Activated naive CD4-positive, alpha-beta T cell treated with anti-CD3 and anti-CD28 coated beads for 36 hours (primary cell): ENCODE measurements at regions of chr9 and their contacts with region 1.

Region 1: DNA sequence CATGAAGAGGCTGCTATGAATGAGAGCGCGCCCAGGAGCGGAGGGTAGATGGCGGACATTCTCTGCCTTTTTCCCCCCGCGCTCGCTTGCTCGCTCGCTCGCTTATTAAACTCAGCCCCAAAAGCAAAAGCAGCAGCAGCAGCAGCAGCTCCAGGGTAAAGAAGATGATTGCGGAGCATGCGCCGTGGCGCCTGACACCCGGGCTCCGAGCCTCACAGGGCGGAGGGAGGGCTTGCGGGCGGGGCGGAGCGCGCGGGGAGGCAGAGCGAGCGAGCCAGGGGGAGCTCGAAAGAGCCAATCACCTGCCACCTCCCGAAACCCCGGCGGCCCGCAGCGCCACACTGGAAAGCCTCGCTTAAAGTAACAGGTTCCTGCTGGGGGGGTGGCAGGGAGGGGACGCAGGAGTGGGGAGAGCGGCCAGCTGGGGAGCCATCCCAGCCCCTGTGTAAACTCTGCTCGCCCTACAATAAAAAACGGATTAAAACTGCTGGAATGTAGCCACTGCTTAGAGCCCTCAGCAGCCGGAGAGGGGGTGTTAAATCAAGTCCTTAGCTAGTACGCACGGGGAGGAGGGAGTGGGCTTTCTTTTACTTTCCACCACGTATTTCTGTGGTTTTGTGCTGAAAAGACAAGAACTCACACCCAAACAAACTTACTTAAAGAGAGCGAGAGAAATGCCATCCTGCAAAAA is at the start of gene MLLT3:
- DNase-seq: peak; percentile 97
- H3K4me3 Mint-ChIP-seq: peak within 1 kb of the TSS; percentile 98
- H3K27ac Mint-ChIP-seq: peak within 1 kb of the TSS; percentile 95
- H3K4me1 Mint-ChIP-seq: peaks cover 36% of the 10 kb centered on the region
- H3K27me3 Mint-ChIP-seq: no peaks in the 10 kb centered on the region
- total RNA-seq, gene MLLT3: 44.3 to 51.4 TPM

Region 2: GRCh38 chr9:19999491-20000057 is 622.9 kb before region 1 on chr9:
- CTCF ChIA-PET with region 1: no interaction called
- intact Hi-C with region 1: loop called (anchors 1 kb)
- DNase-seq: peak; percentile 85
- H3K4me3 Mint-ChIP-seq: no peak overlapping the region
- H3K27ac Mint-ChIP-seq: peak overlapping the region; percentile 85
- H3K4me1 Mint-ChIP-seq: peaks cover 43% of the 10 kb centered on the region
- H3K27me3 Mint-ChIP-seq: no peaks in the 10 kb centered on the region

Region 3: DNA sequence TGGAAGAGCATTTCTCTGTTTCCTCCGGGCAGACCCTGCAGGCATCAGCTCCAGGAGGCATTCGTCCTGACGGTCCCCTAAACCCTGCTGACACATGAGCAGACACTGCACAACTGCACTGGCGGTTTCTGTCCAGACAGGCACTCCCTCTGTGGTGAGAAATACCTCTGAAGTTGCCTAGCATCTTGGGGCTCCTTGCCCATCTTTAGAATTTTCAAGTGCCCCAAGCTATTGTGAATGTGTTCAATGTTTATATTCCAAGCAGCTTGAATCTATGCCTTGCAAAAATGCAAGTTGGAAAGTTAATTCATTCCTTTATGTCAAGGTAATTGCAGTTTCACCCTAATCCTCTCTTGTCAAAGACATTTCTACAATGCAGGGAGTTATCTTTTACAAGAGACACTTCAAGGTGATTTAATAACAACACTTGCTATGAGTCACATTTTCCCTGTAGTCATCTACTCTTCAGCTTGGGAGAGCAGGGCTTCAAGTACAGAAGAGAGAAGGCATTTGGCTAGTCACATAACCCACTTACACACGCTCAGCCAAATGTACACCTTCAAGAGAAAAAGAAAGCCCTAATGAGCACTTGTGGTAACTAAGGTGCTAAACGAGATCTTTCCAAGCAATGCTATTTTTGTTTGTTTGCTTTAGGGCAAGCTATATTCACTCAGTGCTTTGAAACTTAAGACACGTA is 302.7 kb before region 1 on chr9:
- CTCF ChIA-PET with region 1: interaction called, 4 read pairs
- intact Hi-C with region 1: loop called (anchors 1 kb)
- DNase-seq: peak; percentile 48
- H3K4me3 Mint-ChIP-seq: no peak overlapping the region
- H3K27ac Mint-ChIP-seq: peak overlapping the region; percentile 86
- H3K4me1 Mint-ChIP-seq: peaks cover 98% of the 10 kb centered on the region
- H3K27me3 Mint-ChIP-seq: no peaks in the 10 kb centered on the region

Region 4: DNA sequence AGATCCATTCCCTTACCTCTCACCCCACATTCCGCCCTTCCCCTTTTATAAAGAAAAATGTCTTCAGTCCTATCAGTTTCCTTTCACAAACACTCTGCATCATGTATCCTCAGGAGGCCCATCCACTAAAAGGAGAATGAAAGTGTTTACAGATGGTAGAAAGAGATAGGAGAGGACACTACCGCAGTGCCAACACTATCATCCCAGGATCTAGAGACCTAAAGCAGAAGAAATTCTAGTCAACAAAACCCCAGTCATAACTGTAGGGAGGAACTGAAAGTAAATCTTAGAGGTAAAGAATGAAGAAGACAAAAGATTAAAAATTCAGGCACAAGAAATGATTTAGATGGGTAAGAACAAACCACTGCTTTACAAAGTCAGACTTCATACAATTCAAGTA is 114.2 kb before region 1 on chr9:
- CTCF ChIA-PET with region 1: no interaction called
- intact Hi-C with region 1: loop called (anchors 5 kb)
- DNase-seq: no peak
- H3K4me3 Mint-ChIP-seq: peak overlapping the region; percentile 40
- H3K27ac Mint-ChIP-seq: peak overlapping the region; percentile 13
- H3K4me1 Mint-ChIP-seq: peaks cover 80% of the 10 kb centered on the region
- H3K27me3 Mint-ChIP-seq: no peaks in the 10 kb centered on the region

Region 5: GRCh38 chr9:20604562-20604961 is 17.9 kb before region 1 on chr9:
- CTCF ChIA-PET with region 1: interaction called, 10 read pairs
- intact Hi-C with region 1: no loop called
- DNase-seq: no peak
- H3K4me3 Mint-ChIP-seq: peak overlapping the region; percentile 53
- H3K27ac Mint-ChIP-seq: no peak overlapping the region
- H3K4me1 Mint-ChIP-seq: peaks cover 72% of the 10 kb centered on the region
- H3K27me3 Mint-ChIP-seq: no peaks in the 10 kb centered on the region

Region 6: GRCh38 chr9:20929276-20929675 is 306.8 kb after region 1 on chr9:
- CTCF ChIA-PET with region 1: interaction called, 3 read pairs
- intact Hi-C with region 1: loop called (anchors 5 kb)
- DNase-seq: no peak
- H3K4me3 Mint-ChIP-seq: no peak overlapping the region
- H3K27ac Mint-ChIP-seq: no peak overlapping the region
- H3K4me1 Mint-ChIP-seq: peaks cover 15% of the 10 kb centered on the region
- H3K27me3 Mint-ChIP-seq: no peaks in the 10 kb centered on the region

Region 7: GRCh38 chr9:21001581-21001980 is 379.1 kb after region 1 on chr9:
- CTCF ChIA-PET with region 1: no interaction called
- intact Hi-C with region 1: no loop called
- DNase-seq: no peak
- H3K4me3 Mint-ChIP-seq: no peak overlapping the region
- H3K27ac Mint-ChIP-seq: peak overlapping the region; percentile 39
- H3K4me1 Mint-ChIP-seq: peaks cover 33% of the 10 kb centered on the region
- H3K27me3 Mint-ChIP-seq: no peaks in the 10 kb centered on the region

Region 8: GRCh38 chr9:21110708-21111576 is 488.5 kb after region 1 on chr9:
- CTCF ChIA-PET with region 1: interaction called, 10 read pairs
- intact Hi-C with region 1: loop called (anchors 1 kb)
- DNase-seq: peak; percentile 20
- H3K4me3 Mint-ChIP-seq: no peak overlapping the region
- H3K27ac Mint-ChIP-seq: no peak overlapping the region
- H3K4me1 Mint-ChIP-seq: no peaks in the 10 kb centered on the region
- H3K27me3 Mint-ChIP-seq: no peaks in the 10 kb centered on the region